ENCODE measurements at regions of chr6 and their contacts with region 1.

Region 1: GRCh38 chr6:6057424-6058053 is 50.8 kb upstream of the NRN1 start:
- DNase-seq: no peak
- H3K4me3 ChIP-seq: no peak overlapping the region
- H3K27ac ChIP-seq: no peak overlapping the region
- H3K4me1 ChIP-seq: no peaks in the 10 kb centered on the region
- H3K27me3 ChIP-seq: no peaks in the 10 kb centered on the region
- CTCF ChIP-seq: peak in 2 of 4 experiments; percentile 17 to 31
- EP300 ChIP-seq: no peak
- POLR2A ChIP-seq: no peak

Region 2: DNA sequence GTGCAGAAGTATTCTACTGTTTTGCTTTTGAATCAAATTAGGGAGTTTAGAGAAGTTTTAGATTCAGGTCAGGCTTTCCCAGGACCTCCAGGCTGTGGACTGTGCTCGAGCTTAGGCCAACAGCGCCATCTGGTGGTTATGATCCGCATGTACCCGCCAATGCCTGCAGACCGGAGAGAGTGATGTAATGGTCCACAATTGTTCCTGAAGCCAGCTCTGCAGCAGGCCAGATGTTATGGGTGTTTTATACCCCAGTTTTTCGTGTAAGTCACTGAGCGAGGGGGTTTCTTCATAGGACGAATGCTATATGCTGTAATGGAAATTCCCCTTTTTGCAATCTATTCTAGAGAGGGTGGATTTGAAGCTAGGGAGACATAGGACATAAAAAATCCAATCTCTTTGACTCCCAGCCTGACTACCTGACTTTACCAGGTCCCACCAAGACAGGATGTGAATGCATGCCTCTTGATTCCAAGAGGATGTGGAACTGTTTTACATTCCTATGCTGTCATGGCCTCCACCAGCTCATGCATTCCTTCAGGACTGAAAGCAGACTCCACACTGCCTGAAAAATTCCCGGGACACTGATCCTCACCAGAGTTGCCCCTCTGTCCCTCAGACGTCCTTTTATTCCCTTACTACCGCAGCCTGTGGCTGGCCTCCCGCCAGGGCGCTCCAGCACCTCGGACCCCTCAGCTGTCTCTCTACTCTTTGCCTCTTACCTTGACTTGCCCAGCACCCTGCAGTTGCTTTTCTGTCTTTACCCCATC is 489.8 kb after region 1 on chr6:
- intact Hi-C with region 1: loop called (anchors 10 kb)
- DNase-seq: peak; percentile 93
- H3K4me3 ChIP-seq: peak overlapping the region; percentile 18 to 50 (median 38)
- H3K27ac ChIP-seq: peak overlapping the region in 1 of 4 donors; percentile 21
- H3K4me1 ChIP-seq: peaks cover 0 to 14% (median 13%) of the 10 kb centered on the region in 4 donors
- H3K27me3 ChIP-seq: peaks cover 0 to 46% (median 12%) of the 10 kb centered on the region in 3 donors
- CTCF ChIP-seq: peak; percentile 40 to 90 (median 85)
- EP300 ChIP-seq: no peak
- POLR2A ChIP-seq: no peak

Region 3: GRCh38 chr6:6614096-6614982 is 556.8 kb after region 1 on chr6:
- intact Hi-C with region 1: no loop called
- DNase-seq: no peak
- H3K4me3 ChIP-seq: peak overlapping the region in 3 of 4 donors; percentile 12 to 31 (median 20)
- H3K27ac ChIP-seq: peak overlapping the region in 3 of 4 donors; percentile 0 to 45 (median 22)
- H3K4me1 ChIP-seq: peaks cover 0 to 16% (median 5%) of the 10 kb centered on the region in 4 donors
- H3K27me3 ChIP-seq: no peaks in the 10 kb centered on the region
- CTCF ChIP-seq: no peak
- EP300 ChIP-seq: no peak
- POLR2A ChIP-seq: no peak

Measured in sigmoid colon (tissue), 7 donors.